ENCODE measurements at regions of chr19 and their contacts with region 1.

Region 1: DNA sequence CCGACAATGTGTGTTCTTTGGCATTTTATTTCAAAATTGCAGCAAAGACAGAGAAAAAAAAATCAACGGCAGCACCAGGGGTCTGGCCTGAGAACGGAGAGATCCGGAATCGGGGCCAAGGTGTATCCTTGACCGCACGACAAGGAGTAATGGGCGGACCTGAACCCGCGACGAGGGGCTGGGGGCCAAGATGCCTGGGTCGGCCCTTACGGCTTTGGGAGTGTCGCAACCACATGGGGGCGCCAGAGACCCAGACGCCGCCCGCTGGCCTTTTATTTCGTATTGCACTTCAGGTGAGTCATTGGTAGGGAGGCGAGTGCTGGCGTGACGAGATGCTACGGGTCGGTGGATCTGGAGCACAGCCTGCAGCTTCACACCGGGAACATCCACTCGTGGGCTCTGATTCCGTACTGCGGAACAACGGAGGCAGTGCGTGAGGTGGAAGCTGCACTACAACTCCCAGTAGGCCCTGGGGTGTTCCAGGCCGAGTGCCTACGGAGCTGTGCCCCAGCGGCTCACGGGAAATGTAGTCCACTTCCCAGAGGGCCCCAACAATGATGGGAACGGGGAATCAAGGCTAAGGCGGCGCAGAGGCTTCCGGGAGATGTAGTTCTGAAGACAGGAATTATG is 15.7 kb downstream of the BCAT2 start:
- DNase-seq: peak; percentile 91
- ATAC-seq: peak; percentile 99
- H3K4me3 Mint-ChIP-seq: peak overlapping the region; percentile 70
- H3K27ac Mint-ChIP-seq: peak overlapping the region; percentile 82
- H3K4me1 Mint-ChIP-seq: peaks cover 7% of the 10 kb centered on the region
- H3K27me3 Mint-ChIP-seq: no peaks in the 10 kb centered on the region

Region 2: GRCh38 chr19:48608798-48609263 is 186.3 kb before region 1 on chr19:
- CTCF ChIA-PET with region 1: no interaction called
- POLR2A ChIA-PET with region 1: no interaction called
- intact Hi-C with region 1: no loop called
- DNase-seq: peak; percentile 74
- ATAC-seq: peak; percentile 86
- H3K4me3 Mint-ChIP-seq: no peak overlapping the region
- H3K27ac Mint-ChIP-seq: no peak overlapping the region
- H3K4me1 Mint-ChIP-seq: peaks cover 3% of the 10 kb centered on the region
- H3K27me3 Mint-ChIP-seq: no peaks in the 10 kb centered on the region

Region 3: DNA sequence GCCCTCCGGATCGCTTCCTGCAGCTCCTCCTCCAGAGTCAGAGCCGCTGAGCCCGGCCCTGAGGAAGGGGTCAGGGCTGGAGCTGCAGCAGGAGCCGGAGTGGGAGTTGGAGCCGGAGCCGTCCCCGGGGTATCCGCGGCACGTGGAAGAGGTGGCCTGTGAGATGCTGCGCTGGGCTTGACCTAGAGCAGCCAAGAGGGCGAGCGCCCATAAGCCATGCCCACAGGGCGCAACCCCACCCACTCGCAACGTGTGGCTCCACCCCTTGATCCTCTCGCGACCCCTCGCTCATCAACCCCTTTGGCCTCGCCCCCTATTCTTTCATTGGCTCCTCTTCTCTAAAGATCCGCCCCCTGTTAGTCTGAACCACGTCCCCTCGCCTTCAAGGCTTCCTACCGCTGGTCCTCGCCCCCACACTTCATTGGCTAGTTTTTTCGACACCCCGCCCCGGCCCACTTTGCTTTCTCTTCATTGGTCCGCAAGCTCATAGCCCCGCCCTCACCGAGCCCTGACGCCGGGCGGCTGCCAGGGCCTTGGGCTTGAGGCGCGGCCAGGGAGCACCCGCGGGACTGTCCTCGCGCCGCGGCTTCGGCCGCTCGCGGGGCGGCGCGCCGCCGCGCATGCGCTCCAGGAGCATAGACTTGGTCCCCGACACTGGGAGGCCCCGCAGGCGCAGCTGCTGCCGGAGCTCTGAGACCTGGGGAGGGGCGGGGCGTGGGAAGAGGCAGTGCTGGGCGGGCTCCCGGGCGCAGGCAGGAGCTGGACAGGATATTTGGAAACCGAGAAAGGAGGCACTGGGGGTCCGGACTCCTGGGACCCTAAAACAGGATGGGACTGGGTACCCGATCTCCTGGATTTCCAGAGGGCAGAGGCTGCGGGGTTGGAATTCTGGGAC is 81.1 kb before region 1 on chr19:
- CTCF ChIA-PET with region 1: no interaction called
- POLR2A ChIA-PET with region 1: no interaction called
- intact Hi-C with region 1: loop called in 1 of 2 experiments (anchors 1 kb)
- DNase-seq: peak; percentile 99
- ATAC-seq: peak; percentile 93
- H3K4me3 Mint-ChIP-seq: peak overlapping the region; percentile 83
- H3K27ac Mint-ChIP-seq: peak overlapping the region; percentile 84
- H3K4me1 Mint-ChIP-seq: peaks cover 14% of the 10 kb centered on the region
- H3K27me3 Mint-ChIP-seq: no peaks in the 10 kb centered on the region

Region 4: GRCh38 chr19:48780631-48781391 is 14.4 kb before region 1 on chr19:
- CTCF ChIA-PET with region 1: interaction called, 11 read pairs
- POLR2A ChIA-PET with region 1: no interaction called
- intact Hi-C with region 1: no loop called
- DNase-seq: no peak
- ATAC-seq: no peak
- H3K4me3 Mint-ChIP-seq: no peak overlapping the region
- H3K27ac Mint-ChIP-seq: no peak overlapping the region
- H3K4me1 Mint-ChIP-seq: peaks cover 2% of the 10 kb centered on the region
- H3K27me3 Mint-ChIP-seq: peaks cover 9% of the 10 kb centered on the region

Region 5: DNA sequence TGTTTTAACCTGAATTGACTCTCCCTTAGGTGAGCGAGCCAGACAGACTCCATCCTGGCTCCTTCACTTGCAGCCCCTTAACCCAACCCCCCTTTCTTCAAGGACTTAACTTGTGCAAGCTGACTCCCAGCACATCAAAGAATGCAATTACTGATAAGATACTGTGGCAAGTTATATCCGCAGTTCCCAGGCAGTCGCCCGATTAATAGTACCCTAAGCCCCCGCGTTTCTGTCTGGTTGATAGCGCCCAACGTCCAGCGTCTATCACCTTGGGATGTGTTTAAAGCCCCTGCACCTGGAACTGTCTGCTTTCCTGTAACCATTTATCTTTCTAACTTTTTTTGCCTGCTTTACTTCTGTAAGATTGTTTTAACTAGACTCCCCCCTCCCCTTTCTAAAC is 34.9 kb after region 1 on chr19:
- CTCF ChIA-PET with region 1: interaction called, 10 read pairs
- POLR2A ChIA-PET with region 1: interaction called, 4 read pairs
- intact Hi-C with region 1: loop called (anchors 1 kb)
- DNase-seq: no peak
- ATAC-seq: no peak
- H3K4me3 Mint-ChIP-seq: no peak overlapping the region
- H3K27ac Mint-ChIP-seq: no peak overlapping the region
- H3K4me1 Mint-ChIP-seq: no peaks in the 10 kb centered on the region
- H3K27me3 Mint-ChIP-seq: no peaks in the 10 kb centered on the region

Region 6: DNA sequence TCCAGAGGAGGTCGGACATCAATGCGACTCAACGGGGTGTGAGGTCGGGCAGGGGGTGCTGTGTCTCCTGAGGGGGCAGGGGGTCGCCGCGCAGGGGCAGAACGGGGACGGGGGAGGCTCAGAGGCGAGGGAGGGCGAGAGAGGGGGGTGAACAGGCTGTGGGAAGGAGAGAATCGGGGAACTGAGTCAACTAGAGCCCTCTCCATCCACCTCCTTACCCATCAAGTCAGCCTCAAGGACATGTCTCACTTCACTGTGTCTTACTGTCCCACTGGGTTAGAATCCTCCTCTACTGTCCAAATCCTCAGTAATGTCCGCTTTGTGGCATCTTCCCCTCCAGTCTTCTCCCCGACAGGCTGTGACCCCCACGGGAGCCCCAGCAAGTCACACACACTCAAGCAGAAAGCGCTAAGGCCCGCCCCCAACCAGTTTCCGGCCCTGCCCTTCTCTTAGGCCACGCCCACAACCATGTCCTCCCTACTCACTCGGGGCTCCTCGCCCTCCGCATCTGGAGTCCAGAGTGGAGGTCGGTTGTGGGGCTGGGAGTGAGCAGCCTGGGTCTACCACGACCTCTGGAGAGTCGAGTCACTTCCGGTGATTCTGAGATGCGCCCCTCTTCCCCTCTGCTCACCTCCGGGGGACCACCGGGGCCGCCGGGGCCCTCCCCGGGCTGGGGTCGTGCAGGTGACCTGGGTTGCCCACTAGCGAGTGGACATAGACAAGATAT is 64.0 kb after region 1 on chr19:
- CTCF ChIA-PET with region 1: interaction called, 6 read pairs
- POLR2A ChIA-PET with region 1: no interaction called
- intact Hi-C with region 1: loop called in 1 of 2 experiments (anchors 1 kb)
- DNase-seq: peak; percentile 92
- ATAC-seq: peak; percentile 92
- H3K4me3 Mint-ChIP-seq: peak overlapping the region; percentile 94
- H3K27ac Mint-ChIP-seq: peak overlapping the region; percentile 93
- H3K4me1 Mint-ChIP-seq: peaks cover 7% of the 10 kb centered on the region
- H3K27me3 Mint-ChIP-seq: no peaks in the 10 kb centered on the region

Region 7: DNA sequence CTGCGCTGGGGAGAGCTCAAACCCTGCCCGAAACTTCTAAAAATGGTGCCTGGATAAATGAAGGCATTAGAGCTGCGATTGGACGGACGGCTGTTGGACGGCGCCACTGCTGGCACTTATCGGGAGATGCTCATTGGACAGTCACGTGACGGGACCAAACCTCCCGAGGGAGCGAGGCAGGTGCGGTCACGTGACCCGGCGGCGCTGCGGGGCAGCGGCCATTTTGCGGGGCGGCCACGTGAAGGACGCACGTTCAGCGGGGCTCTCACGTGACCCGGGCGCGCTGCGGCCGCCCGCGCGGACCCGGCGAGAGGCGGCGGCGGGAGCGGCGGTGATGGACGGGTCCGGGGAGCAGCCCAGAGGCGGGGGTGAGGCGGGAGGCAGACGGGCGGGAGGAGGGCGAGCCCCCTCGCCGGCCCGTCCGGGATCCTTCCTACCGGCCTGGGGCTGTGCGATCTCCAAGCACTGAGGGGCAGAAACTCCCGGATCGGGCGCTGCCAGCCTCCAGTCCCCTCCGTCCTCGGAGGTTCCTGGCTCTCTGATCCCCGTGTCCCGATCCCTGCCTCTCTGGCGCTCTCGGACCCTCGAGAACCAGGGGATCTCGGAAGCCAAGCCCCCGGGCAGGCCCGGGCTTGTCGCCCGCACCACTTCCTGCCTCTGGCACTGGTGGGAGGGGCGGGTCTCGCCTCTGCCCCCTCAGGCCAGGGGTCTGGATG is 159.6 kb after region 1 on chr19 and contains the start of gene BAX:
- CTCF ChIA-PET with region 1: no interaction called
- POLR2A ChIA-PET with region 1: no interaction called
- intact Hi-C with region 1: loop called in 1 of 2 experiments (anchors 1 kb)
- DNase-seq: peak; percentile 98
- ATAC-seq: peak; percentile 89
- H3K4me3 Mint-ChIP-seq: peak within 1 kb of the TSS; percentile 74
- H3K27ac Mint-ChIP-seq: peak within 1 kb of the TSS; percentile 87
- H3K4me1 Mint-ChIP-seq: peaks cover 26% of the 10 kb centered on the region
- H3K27me3 Mint-ChIP-seq: no peaks in the 10 kb centered on the region
- total RNA-seq, gene BAX: 128 to 143 TPM